Activated CD4-positive, alpha-beta memory T cell treated with anti-CD3 and anti-CD28 coated beads for 36 hours (primary cell): ENCODE measurements at regions of chr20 and their contacts with region 1.

Region 1: GRCh38 chr20:45890985-45891983 is at the starts of genes CTSA and NEURL2:
- DNase-seq: peak; percentile 92
- H3K4me3 Mint-ChIP-seq: peak within 1 kb of the TSS; percentile 85
- H3K27ac Mint-ChIP-seq: peak within 1 kb of the TSS; percentile 81
- H3K4me1 Mint-ChIP-seq: peaks cover 32% of the 10 kb centered on the region
- H3K27me3 Mint-ChIP-seq: no peaks in the 10 kb centered on the region
- total RNA-seq, gene CTSA: 49.8 to 54.8 TPM
- total RNA-seq, gene NEURL2: 2.3 to 2.5 TPM

Region 2: DNA sequence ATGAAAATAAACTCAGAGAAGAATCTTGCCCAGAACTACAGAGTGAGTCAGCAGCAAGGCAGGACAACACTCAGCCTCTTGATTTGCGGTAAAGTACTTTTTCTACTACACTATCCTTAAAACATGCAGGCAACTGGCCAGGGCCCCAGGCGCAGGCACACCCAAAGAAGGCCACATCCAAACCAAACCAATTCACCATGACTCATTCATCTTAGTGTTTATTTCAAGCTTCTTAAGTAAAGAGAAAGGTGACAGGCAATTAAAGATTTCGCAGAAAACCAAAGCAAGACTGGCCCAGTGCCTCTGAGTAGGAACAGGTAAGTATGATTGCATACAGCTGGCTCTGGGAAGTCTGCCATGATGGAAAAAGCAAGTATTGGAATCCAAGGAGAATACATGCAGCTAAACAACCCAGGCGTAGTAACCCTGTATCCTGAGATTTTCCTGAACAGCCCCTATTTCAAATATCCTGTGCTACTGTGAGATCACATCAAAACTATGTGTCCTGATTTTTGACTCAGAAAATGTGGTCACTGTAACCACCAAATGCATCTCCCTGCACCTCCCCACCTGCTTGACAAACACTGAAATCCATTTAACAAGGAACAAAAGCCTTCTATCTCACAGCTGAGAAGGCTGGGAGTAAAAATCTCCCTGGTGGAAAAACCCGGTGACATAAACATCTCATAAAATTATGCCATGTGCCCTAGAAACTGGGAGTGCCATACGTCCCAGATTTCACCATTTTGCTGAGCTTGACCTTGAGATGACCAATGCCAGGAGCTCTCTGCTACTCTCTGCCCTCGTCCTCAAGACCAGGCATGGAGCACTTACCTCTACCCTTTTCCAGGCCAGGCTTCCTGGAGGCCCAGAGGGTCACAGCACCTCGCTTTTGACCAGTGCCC is 112.0 kb before region 1 on chr20:
- CTCF ChIA-PET with region 1: no interaction called
- POLR2A ChIA-PET with region 1: no interaction called
- intact Hi-C with region 1: no loop called
- DNase-seq: no peak
- H3K4me3 Mint-ChIP-seq: no peak overlapping the region
- H3K27ac Mint-ChIP-seq: no peak overlapping the region
- H3K4me1 Mint-ChIP-seq: peaks cover 6% of the 10 kb centered on the region
- H3K27me3 Mint-ChIP-seq: no peaks in the 10 kb centered on the region

Region 3: GRCh38 chr20:45792332-45792686 is 99.0 kb before region 1 on chr20:
- CTCF ChIA-PET with region 1: no interaction called
- POLR2A ChIA-PET with region 1: no interaction called
- intact Hi-C with region 1: loop called (anchors 5 kb)
- DNase-seq: peak; percentile 20
- H3K4me3 Mint-ChIP-seq: peak overlapping the region; percentile 86
- H3K27ac Mint-ChIP-seq: peak overlapping the region; percentile 81
- H3K4me1 Mint-ChIP-seq: peaks cover 15% of the 10 kb centered on the region
- H3K27me3 Mint-ChIP-seq: no peaks in the 10 kb centered on the region

Region 4: GRCh38 chr20:45857114-45857881 is 34.0 kb before region 1 on chr20 and contains the starts of genes ACOT8 and ZSWIM3:
- CTCF ChIA-PET with region 1: no interaction called
- POLR2A ChIA-PET with region 1: interaction called, 13 read pairs
- intact Hi-C with region 1: loop called (anchors 1 kb)
- DNase-seq: peak; percentile 96
- H3K4me3 Mint-ChIP-seq: peak within 1 kb of the TSS; percentile 97
- H3K27ac Mint-ChIP-seq: peak within 1 kb of the TSS; percentile 97
- H3K4me1 Mint-ChIP-seq: peaks cover 35% of the 10 kb centered on the region
- H3K27me3 Mint-ChIP-seq: no peaks in the 10 kb centered on the region
- total RNA-seq, gene ACOT8: 25.5 to 29.0 TPM
- total RNA-seq, gene ZSWIM3: 4.7 TPM

Region 5: DNA sequence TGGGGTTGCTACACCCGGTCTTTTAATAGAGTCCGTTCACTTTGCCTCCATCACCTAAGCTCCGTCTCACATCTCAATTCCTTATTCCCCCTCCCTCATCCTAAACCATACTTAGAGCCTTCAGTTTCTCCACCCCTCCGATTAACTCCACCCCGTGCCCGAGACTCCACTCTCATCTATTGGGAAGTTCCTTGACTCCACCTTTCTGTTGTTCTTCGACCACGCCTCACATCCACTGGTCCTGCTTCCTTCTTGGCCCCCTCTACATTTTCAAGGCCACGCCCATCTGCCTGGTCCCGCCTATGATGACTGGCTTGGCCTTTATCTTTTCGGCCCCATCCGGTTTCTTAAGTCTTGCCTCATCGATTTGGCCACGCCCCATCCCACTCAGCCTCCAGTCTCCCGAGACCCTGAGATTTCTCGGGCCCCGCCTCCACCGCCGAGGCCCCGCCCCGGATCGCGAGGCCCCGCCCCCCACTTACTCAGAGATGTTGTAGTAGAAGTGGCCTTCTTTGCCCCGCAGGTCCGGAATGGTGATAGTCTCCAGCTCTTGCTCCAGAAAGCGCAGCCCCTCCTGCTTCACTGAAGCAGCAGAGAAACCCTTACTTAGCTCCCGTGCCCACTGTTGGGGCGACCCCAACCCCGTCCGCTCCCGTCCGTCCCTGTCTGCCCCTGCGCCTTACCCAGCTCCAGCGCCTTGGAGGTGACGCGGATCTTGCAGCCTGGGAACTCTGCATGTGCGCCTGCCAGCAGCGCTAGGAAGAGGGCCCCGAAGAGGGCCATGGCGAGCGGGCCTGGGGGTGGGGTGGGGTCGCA is 19.6 kb after region 1 on chr20:
- CTCF ChIA-PET with region 1: no interaction called
- POLR2A ChIA-PET with region 1: interaction called, 5 read pairs
- intact Hi-C with region 1: loop called (anchors 2 kb)
- DNase-seq: peak; percentile 98
- H3K4me3 Mint-ChIP-seq: peak overlapping the region; percentile 74
- H3K27ac Mint-ChIP-seq: peak overlapping the region; percentile 46
- H3K4me1 Mint-ChIP-seq: peaks cover 23% of the 10 kb centered on the region
- H3K27me3 Mint-ChIP-seq: peaks cover 9% of the 10 kb centered on the region

Region 6: GRCh38 chr20:46230801-46231282 is 339.6 kb after region 1 on chr20:
- CTCF ChIA-PET with region 1: no interaction called
- POLR2A ChIA-PET with region 1: no interaction called
- intact Hi-C with region 1: no loop called
- DNase-seq: peak; percentile 19
- H3K4me3 Mint-ChIP-seq: no peak overlapping the region
- H3K27ac Mint-ChIP-seq: no peak overlapping the region
- H3K4me1 Mint-ChIP-seq: no peaks in the 10 kb centered on the region
- H3K27me3 Mint-ChIP-seq: peaks cover 35% of the 10 kb centered on the region